Activated T-helper 1 cell treated with anti-CD3 and anti-CD28 coated beads, Interleukin-12 subunit alpha, Interleukin-12 subunit beta, Interleukin-2, Interleukin-4 antibody, amounts not matched to agents 30 ng/mL and 10 ng/mL and 1 ng/mL, durations not matched to agents 14 hours and 24 hours and 36 hours (primary cell): ENCODE measurements at regions of chr11 and their contacts with region 1.

Region 1: DNA sequence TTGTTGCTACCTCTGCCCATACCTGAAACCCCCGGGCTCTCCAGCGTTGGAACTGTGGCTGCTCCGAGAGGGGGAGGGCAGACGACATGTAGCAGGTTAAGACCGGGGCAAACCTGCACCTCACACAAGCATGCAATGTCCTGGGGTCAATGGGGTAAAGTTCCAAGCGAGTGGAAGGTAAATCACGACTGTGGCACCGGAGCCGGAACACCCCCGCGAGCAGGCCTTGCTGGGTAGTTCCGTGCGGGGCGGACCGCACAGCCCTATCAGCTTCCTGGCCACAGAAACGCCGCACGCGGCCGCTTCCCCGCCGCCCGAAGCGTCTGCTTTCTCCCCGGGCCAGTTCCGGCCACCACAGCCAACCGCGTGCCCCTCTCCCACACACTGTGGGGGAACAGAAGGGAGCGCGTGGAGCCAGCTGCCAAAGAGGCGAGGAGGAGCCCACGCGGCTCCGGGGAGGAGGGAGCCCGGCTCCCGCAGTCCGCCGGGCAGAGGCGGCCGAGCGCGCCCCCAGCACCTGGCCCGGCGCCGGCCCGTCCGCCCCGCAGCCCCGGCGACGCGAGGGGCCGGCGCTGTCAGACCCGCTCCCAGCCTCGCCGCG is 1.6 kb downstream of the SPTBN2 start:
- DNase-seq: no peak
- H3K4me3 Mint-ChIP-seq: peak overlapping the region; percentile 45
- H3K27ac Mint-ChIP-seq: peak overlapping the region; percentile 20
- H3K4me1 Mint-ChIP-seq: peaks cover 12% of the 10 kb centered on the region
- H3K27me3 Mint-ChIP-seq: peaks cover 55% of the 10 kb centered on the region

Region 2: DNA sequence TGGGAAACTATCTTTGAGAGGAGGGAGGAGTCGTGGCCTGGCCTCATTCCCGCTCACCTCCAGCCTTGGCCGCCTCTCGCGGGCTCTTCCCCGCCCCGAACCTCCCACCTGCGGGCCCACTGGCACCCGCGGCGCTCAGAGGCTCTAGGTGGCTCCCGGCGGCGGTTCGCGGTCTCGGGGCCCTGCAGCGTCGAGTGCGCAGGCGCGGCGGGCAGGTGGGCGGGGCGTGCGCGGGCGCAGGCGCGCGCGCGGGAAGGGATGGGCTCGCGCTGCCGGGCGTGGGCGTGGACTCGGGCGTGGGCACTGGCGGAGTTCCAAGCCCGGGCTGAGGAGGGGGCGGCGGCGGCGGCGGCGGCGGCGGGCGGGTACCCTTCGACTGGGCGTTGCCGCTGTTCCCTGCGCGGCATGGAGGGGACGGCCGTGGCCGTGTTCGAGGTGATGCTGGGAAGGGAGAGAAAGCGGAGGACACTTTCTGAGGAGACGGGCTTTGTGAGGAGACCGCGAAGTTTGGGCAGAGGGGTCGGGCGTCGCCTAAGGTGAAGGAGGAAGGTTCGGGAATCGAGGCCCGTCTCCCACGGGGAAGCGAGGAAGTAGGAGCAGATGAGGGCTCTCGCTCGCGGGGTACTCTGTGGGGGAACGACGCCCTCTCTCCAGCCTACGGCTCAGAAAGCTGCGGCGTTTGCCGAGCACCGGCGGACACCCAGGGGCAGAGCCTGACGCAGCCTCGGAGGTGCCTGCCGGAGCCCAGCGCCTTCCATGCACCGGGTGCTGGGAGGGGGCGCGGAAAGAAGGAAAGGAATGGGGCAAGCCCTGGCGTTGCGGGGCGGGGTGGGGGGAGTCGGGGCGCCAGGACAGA is 17.3 kb after region 1 on chr11:
- intact Hi-C with region 1: loop called (anchors 2 kb)
- DNase-seq: peak; percentile 91
- H3K4me3 Mint-ChIP-seq: peak overlapping the region; percentile 90
- H3K27ac Mint-ChIP-seq: peak overlapping the region; percentile 80
- H3K4me1 Mint-ChIP-seq: no peaks in the 10 kb centered on the region
- H3K27me3 Mint-ChIP-seq: peaks cover 2% of the 10 kb centered on the region